ENCODE measurements at regions of chr2 and their contacts with region 1.

Region 1: GRCh38 chr2:165401285-165401852 is 68.1 kb upstream of the CSRNP3 start:
- DNase-seq: peak in 1 of 2 donors; percentile 34
- ATAC-seq: peak in 1 of 8 donors; percentile 56
- H3K4me3 ChIP-seq: no peak overlapping the region
- H3K27ac ChIP-seq: no peak overlapping the region
- H3K4me1 ChIP-seq: peaks cover 0 to 10% (median 0%) of the 10 kb centered on the region in 9 donors
- H3K27me3 ChIP-seq: peaks cover 0 to 24% (median 6%) of the 10 kb centered on the region in 7 donors
- CTCF ChIP-seq: peak; percentile 47 to 83 (median 77)

Region 2: GRCh38 chr2:165251366-165251765 is 150.0 kb before region 1 on chr2:
- intact Hi-C with region 1: no loop called
- DNase-seq: no peak
- ATAC-seq: no peak
- H3K4me3 ChIP-seq: no peak overlapping the region
- H3K27ac ChIP-seq: no peak overlapping the region
- H3K4me1 ChIP-seq: no peaks in the 10 kb centered on the region
- H3K27me3 ChIP-seq: no peaks in the 10 kb centered on the region
- CTCF ChIP-seq: no peak

Region 3: GRCh38 chr2:165691615-165692014 is 290.2 kb after region 1 on chr2:
- intact Hi-C with region 1: loop called in 6 of 10 experiments (anchors 2 to 5 kb)
- DNase-seq: peak; percentile 6 to 19
- ATAC-seq: peak in 7 of 8 donors; percentile 45 to 91 (median 66)
- H3K4me3 ChIP-seq: no peak overlapping the region
- H3K27ac ChIP-seq: no peak overlapping the region
- H3K4me1 ChIP-seq: peaks cover 0 to 9% (median 0%) of the 10 kb centered on the region in 9 donors
- H3K27me3 ChIP-seq: no peaks in the 10 kb centered on the region
- CTCF ChIP-seq: peak in 1 of 9 donors; percentile 8

Region 4: DNA sequence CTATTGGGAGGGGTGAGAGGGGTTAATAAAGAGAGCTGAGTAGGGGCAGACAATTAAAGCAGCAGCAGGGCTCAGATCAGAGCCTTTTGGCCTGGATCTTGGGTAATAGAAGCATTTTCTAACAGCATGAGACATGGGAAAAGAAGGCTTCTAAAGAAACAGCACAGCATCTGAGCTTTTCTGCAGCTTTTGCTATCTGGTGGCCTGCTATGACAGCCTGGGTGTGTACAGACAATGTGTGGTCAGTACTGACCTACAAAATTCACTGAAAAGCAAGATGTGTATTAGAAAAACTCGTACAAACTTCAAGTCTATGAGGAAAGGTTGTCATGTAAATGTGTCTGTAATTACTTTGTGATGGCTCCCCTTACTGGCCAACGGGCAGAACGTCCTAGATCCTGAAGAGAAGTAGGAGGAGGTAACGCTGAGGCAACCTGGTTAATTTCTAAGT is 297.1 kb after region 1 on chr2:
- intact Hi-C with region 1: loop called (anchors 1 to 5 kb)
- DNase-seq: peak in 1 of 2 donors; percentile 24
- ATAC-seq: peak in 7 of 8 donors; percentile 56 to 81 (median 69)
- H3K4me3 ChIP-seq: no peak overlapping the region
- H3K27ac ChIP-seq: no peak overlapping the region
- H3K4me1 ChIP-seq: peaks cover 0 to 5% (median 0%) of the 10 kb centered on the region in 9 donors
- H3K27me3 ChIP-seq: no peaks in the 10 kb centered on the region
- CTCF ChIP-seq: peak in 8 of 9 donors; percentile 28 to 64 (median 44)

Region 5: DNA sequence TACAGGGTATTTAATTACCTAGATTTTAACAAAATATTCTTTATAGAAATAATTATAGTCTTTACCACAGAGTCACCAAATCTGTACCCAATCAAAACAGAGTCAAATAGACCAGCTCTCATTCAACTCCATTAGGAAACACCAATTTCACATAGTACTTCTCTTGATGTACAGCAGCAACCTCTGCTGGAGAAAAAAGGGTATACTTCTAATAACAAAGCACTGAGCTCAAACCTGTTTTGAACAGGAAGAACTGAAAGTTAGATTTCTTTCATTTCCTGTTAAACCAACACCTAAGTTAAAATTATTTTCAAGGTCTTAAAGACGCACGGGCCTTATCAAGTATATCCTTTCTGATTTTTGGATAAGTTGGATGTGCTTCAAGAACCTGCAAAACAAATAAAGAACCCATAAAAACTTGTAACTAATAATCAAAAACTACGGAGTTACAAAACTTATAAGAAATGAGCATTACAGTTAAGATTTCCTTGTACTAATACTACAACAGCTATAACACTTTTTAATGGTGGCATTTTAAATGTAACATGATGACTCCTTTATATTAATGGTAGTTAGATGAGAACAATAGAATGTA is 473.2 kb after region 1 on chr2:
- intact Hi-C with region 1: loop called in 9 of 10 experiments (anchors 2 to 10 kb)
- DNase-seq: no peak
- ATAC-seq: peak in 6 of 8 donors; percentile 37 to 71 (median 48)
- H3K4me3 ChIP-seq: no peak overlapping the region
- H3K27ac ChIP-seq: no peak overlapping the region
- H3K4me1 ChIP-seq: peaks cover 0 to 18% (median 0%) of the 10 kb centered on the region in 9 donors
- H3K27me3 ChIP-seq: no peaks in the 10 kb centered on the region
- CTCF ChIP-seq: peak; percentile 23 to 80 (median 70)